Activated CD4-positive, alpha-beta memory T cell treated with anti-CD3 and anti-CD28 coated beads, Interleukin-2, amount 10 ng/mL, durations not matched to agents 7 days and 5 days (primary cell): ENCODE measurements at regions of chr20 and their contacts with region 1.

Region 1: DNA sequence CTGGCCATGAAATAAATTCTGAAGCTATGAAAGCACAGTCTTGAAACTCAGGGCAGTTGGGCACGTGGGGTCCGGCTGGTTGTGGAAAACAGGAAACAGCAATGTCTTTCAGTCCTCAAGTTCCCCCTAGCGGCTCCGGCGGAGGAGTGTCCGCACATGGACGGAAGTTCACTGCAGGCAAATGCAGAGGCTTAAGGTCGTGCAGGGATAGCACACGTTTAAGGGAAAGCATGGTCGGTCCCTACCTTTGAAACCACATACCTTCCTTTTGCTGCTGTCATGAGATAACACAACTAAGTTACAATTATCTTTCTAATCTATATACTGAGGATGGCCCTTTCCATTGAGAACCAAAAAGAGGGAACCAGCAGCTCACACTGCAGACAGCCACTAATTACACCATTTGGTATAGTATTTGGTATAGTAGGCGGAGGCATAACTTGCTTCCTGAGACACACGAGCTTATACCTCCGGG is 52.6 kb upstream of the NFATC2 start:
- DNase-seq: peak; percentile 85
- H3K4me3 Mint-ChIP-seq: no peak overlapping the region
- H3K27ac Mint-ChIP-seq: peak overlapping the region; percentile 65
- H3K4me1 Mint-ChIP-seq: peaks cover 30% of the 10 kb centered on the region
- H3K27me3 Mint-ChIP-seq: peaks cover 11% of the 10 kb centered on the region

Region 2: DNA sequence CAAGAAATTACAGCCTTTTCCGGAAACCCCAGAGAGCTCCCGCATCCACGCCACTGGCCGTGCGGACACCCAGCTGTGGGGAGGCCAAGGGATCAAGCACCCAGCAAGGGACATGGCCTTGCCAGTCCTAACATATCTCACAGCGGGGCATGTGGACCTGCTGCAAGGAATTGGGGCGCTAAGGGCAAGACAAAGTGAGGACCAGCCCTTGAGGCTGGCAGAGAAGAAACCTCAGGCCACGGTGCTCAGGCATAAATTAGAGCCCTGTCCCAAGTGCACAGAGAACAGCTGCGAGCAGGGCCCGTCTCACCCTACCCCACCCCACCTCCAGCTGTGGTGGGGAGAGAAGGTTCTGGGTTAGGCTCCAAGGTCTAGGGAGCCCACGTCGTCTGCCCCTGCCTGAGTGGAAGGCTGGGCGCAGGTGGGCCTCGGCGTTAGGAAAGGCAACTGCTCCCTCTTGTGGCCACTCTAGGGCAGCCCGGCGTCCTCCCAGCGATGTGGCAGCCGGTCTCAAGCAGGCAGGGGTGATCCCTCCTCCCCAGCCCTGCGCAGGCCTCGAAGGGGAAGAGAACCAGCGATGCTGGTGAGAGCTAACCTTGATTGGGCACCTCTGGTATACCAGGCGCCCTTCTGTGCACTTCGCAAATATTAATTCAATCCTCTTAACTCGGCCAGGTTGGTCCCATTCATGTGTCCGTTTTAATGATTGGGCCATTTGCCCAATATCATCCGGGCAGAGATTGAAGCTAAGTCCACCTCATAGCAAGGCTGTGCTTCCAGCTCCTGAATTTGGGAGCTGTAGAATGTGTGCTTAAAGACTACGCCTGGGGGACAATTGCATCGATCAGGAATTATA is 288.4 kb before region 1 on chr20:
- CTCF ChIA-PET with region 1: interaction called, 10 read pairs
- POLR2A ChIA-PET with region 1: no interaction called
- DNase-seq: peak; percentile 71
- H3K4me3 Mint-ChIP-seq: no peak overlapping the region
- H3K27ac Mint-ChIP-seq: no peak overlapping the region
- H3K4me1 Mint-ChIP-seq: peaks cover 2% of the 10 kb centered on the region
- H3K27me3 Mint-ChIP-seq: peaks cover 23% of the 10 kb centered on the region

Region 3: GRCh38 chr20:51378171-51378929 is 216.7 kb before region 1 on chr20:
- CTCF ChIA-PET with region 1: interaction called, 47 read pairs
- POLR2A ChIA-PET with region 1: interaction called, 3 read pairs
- DNase-seq: peak; percentile 30
- H3K4me3 Mint-ChIP-seq: no peak overlapping the region
- H3K27ac Mint-ChIP-seq: peak overlapping the region; percentile 2
- H3K4me1 Mint-ChIP-seq: peaks cover 20% of the 10 kb centered on the region
- H3K27me3 Mint-ChIP-seq: no peaks in the 10 kb centered on the region

Region 4: DNA sequence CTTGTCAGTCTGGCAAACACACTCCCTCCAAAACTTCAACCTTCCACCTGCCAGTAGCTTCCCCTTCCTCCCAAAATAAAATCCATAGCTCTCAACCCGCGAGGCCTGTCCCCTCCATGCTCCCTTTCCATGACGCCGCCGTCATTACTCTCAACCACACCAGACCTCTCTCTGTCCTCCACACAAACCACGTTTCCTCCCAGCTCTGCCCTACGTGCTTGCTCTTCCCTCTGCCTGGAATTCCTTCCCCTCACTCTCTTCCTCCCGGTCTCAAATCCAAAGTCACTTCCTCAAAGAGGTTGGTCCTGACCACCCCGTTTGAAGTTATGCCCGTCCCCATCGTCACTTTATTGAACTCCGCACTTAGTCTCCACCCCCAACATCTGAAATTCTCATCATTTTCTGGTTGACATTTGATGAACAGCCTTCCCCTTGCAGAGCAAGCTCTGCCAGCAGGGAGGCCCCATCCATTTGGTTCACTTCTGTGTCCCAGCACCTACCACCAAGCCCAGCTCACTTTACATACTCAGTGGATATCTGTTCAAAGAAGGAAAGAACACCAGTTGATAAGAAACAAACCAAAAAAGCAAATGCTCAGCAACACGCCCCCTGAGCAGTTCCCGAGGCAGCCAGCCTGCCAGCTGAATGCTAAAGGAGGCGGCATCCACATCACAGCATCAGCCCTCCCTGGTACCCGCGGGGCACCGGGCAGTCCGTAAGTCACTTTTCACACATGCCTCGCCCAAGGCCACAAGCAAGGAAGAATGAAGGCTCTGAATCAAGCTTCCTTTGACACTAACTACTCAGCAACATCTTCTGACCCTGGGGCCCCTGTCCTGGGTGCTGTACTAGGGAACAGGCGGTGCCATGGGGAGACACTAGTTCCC is 177.6 kb before region 1 on chr20:
- CTCF ChIA-PET with region 1: interaction called, 12 read pairs
- POLR2A ChIA-PET with region 1: no interaction called
- DNase-seq: peak; percentile 55
- H3K4me3 Mint-ChIP-seq: peak overlapping the region; percentile 1
- H3K27ac Mint-ChIP-seq: peak overlapping the region; percentile 85
- H3K4me1 Mint-ChIP-seq: peaks cover 97% of the 10 kb centered on the region
- H3K27me3 Mint-ChIP-seq: no peaks in the 10 kb centered on the region

Region 5: GRCh38 chr20:51480507-51481270 is 114.4 kb before region 1 on chr20:
- CTCF ChIA-PET with region 1: interaction called, 12 read pairs
- POLR2A ChIA-PET with region 1: no interaction called
- DNase-seq: peak; percentile 50
- H3K4me3 Mint-ChIP-seq: peak overlapping the region; percentile 58
- H3K27ac Mint-ChIP-seq: peak overlapping the region; percentile 80
- H3K4me1 Mint-ChIP-seq: peaks cover 86% of the 10 kb centered on the region
- H3K27me3 Mint-ChIP-seq: no peaks in the 10 kb centered on the region

Region 6: DNA sequence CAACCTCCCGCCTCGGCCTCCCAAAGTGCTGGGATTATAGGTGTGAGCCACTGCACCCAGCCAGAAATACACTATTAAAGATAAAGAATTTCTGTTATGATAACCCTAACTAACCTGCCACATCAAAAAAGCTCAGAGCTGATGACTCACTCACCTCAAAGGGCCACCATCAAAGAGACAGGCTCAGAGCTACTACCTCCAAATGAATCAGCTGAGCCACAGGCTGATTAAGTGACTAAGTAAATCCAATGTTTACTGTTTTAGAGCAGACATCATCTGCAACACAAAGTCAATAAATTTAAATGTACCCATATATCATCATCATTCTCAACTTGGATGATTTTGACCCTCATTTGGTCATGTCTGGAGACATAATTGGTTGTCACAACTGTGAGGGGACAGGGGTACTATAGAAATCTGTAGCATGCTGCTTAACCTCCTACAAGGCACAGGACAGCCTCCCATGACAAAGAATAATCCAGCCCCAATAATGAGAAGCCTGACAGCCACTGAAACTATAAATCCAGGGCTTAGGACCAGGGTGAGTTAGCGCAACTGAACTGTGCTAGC is 66.6 kb after region 1 on chr20:
- CTCF ChIA-PET with region 1: no interaction called
- POLR2A ChIA-PET with region 1: no interaction called
- DNase-seq: peak; percentile 39
- H3K4me3 Mint-ChIP-seq: no peak overlapping the region
- H3K27ac Mint-ChIP-seq: no peak overlapping the region
- H3K4me1 Mint-ChIP-seq: peaks cover 23% of the 10 kb centered on the region
- H3K27me3 Mint-ChIP-seq: peaks cover 8% of the 10 kb centered on the region

Region 7: GRCh38 chr20:51712501-51713197 is 117.6 kb after region 1 on chr20:
- CTCF ChIA-PET with region 1: no interaction called
- POLR2A ChIA-PET with region 1: no interaction called
- DNase-seq: no peak
- H3K4me3 Mint-ChIP-seq: no peak overlapping the region
- H3K27ac Mint-ChIP-seq: no peak overlapping the region
- H3K4me1 Mint-ChIP-seq: peaks cover 12% of the 10 kb centered on the region
- H3K27me3 Mint-ChIP-seq: peaks cover 11% of the 10 kb centered on the region